Right cardiac atrium (tissue), 5 donors: ENCODE measurements at regions of chr7 and their contacts with region 1.

Region 1: DNA sequence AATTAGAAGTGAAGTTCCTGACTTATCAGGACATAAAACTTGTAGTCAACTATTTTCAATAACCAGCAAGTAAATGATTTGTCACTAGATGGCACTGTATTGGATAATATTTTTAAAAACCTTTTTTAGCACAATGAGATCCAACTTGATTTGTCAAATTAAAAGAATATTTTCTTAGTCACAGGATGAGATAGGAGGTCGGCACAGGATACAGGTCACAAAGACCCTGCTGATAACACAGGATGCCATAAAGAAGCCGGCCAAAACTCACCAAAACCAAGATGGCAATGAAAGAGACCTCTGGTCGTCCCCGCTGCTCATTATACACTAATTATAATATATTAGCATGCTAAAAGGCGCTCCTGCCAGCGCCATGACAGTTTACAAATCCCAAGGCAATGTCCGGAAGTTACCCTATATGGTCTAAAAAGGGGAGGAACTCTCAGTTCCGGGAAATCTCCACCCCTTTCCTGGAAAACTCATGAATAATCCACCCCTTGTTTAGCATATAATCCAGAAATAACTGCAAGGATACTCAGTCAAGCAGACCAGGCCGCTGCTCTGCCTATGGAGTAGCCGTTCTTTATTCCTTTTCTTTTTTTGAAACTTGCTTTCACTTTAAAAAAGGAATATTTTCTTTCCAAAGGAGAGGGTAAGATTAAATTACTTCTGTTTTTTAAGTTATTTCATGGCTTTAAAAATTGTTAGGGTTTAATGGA is 255.7 kb upstream of the MKLN1 start:
- DNase-seq: peak; percentile 68 to 80 (median 73)
- ATAC-seq: peak; percentile 66 to 89
- H3K4me3 ChIP-seq: peak overlapping the region; percentile 38
- H3K27ac ChIP-seq: peak overlapping the region; percentile 67
- H3K4me1 ChIP-seq: peaks cover 16% of the 10 kb centered on the region
- H3K27me3 ChIP-seq: no peaks in the 10 kb centered on the region

Region 2: DNA sequence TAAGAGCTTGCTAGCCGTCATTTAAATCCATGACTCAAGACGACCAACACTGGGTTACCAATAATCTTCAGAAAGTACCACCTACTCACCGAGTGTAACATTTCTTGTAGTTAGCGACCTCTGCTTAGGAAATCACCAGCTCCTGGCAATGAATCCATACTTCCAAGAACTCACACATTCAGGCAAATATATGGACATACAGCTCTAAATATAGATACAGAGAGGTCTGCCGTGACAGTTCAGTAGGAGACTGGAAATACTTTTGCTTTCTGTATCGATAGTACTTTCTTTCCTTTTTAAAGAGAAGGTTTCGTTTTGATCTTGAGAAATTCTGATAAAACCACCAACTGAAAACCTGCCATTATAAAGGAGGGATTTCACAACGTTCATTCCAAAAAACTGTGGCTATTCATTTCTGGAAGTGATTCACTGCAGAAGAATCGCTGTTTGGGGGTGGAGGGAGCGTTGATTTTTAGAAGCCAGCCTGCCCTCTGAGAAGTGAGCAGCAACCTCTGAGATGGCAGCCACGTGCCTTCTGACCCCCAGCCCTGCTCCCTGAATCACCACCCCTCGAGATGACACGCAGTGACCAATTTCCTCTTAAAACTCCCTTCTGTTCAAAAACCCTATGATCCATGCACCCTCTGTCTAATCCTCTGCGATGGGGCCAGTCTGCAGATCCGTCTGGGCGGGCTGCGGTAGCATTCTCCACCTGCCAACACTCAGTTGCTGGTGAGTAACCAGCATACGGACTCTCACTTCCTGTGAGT is 158.9 kb before region 1 on chr7:
- intact Hi-C with region 1: no loop called
- DNase-seq: peak; percentile 71 to 82 (median 81)
- ATAC-seq: peak; percentile 79 to 85
- H3K4me3 ChIP-seq: peak overlapping the region; percentile 70
- H3K27ac ChIP-seq: peak overlapping the region; percentile 88
- H3K4me1 ChIP-seq: peaks cover 19% of the 10 kb centered on the region
- H3K27me3 ChIP-seq: no peaks in the 10 kb centered on the region

Region 3: GRCh38 chr7:131424219-131424822 is 352.4 kb after region 1 on chr7:
- intact Hi-C with region 1: loop called in 3 of 4 experiments (anchors 10 kb)
- DNase-seq: no peak
- ATAC-seq: peak; percentile 44 to 62
- H3K4me3 ChIP-seq: no peak overlapping the region
- H3K27ac ChIP-seq: peak overlapping the region; percentile 19
- H3K4me1 ChIP-seq: peaks cover 2% of the 10 kb centered on the region
- H3K27me3 ChIP-seq: no peaks in the 10 kb centered on the region